Esophagus squamous epithelium (tissue), 5 donors: ENCODE measurements at regions of chr6 and their contacts with region 1.

Region 1: GRCh38 chr6:10954590-10955010 is 67.7 kb downstream of the SYCP2L start:
- DNase-seq: no peak
- H3K4me3 ChIP-seq: no peak overlapping the region
- H3K27ac ChIP-seq: no peak overlapping the region
- H3K4me1 ChIP-seq: no peaks in the 10 kb centered on the region
- H3K27me3 ChIP-seq: no peaks in the 10 kb centered on the region
- CTCF ChIP-seq: peak; percentile 42 to 87 (median 70)
- POLR2A ChIP-seq: no peak

Region 2: DNA sequence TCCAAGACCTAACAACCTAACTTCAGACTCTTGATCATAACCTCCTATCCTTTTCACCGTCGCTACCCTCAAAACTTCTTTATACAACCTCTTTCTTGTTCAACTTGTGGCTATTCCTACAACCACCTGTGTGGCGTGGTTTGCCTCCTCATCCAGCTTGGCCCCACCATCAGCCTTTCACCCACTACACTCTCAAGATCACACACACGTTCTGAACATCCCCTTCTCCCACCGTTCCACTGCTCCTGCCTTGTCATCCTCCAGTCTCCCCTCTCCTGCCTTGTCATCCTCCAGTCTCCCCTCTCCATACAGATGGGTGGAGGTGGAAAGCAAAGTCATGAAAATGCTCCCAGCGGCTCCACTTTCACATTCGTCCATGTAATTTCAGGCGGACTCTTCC is 130.3 kb before region 1 on chr6:
- intact Hi-C with region 1: no loop called
- DNase-seq: no peak
- H3K4me3 ChIP-seq: no peak overlapping the region
- H3K27ac ChIP-seq: no peak overlapping the region
- H3K4me1 ChIP-seq: no peaks in the 10 kb centered on the region
- H3K27me3 ChIP-seq: no peaks in the 10 kb centered on the region
- CTCF ChIP-seq: no peak
- POLR2A ChIP-seq: no peak

Region 3: DNA sequence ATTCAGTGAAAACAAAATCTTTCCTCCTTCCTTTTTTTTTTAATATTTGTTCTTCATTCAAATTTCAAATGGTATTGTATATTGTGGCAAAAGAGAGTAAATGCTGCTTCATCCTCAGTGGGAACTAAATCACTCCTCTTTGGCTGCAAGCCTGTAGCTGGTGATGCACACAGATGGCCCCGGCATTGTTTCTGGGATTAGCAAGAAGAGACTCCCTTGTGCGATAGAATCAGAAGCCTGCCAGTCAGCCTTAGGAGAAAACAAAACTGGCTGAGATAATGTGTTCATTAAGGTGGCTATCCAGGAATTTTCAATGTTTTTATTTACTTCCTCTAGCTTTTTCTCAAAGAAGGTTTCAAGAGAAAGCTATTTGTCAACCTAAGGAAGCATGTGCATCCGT is 110.2 kb after region 1 on chr6:
- intact Hi-C with region 1: loop called (anchors 5 kb)
- DNase-seq: no peak
- H3K4me3 ChIP-seq: no peak overlapping the region
- H3K27ac ChIP-seq: no peak overlapping the region
- H3K4me1 ChIP-seq: no peaks in the 10 kb centered on the region
- H3K27me3 ChIP-seq: peaks cover 0 to 11% (median 0%) of the 10 kb centered on the region in 4 donors
- CTCF ChIP-seq: no peak
- POLR2A ChIP-seq: no peak